ENCODE measurements at regions of chr10 and their contacts with region 1.

Region 1: GRCh38 chr10:21336476-21337170 is 188.9 kb downstream of the SKIDA1 start:
- DNase-seq: peak; percentile 90
- H3K4me3 ChIP-seq: peak overlapping the region; percentile 0 to 15 (median 8)
- H3K27ac ChIP-seq: peak overlapping the region; percentile 53
- H3K4me1 ChIP-seq: peaks cover 30% of the 10 kb centered on the region
- H3K27me3 ChIP-seq: no peaks in the 10 kb centered on the region
- CTCF ChIP-seq: peak in 1 of 2 donors; percentile 26

Region 2: DNA sequence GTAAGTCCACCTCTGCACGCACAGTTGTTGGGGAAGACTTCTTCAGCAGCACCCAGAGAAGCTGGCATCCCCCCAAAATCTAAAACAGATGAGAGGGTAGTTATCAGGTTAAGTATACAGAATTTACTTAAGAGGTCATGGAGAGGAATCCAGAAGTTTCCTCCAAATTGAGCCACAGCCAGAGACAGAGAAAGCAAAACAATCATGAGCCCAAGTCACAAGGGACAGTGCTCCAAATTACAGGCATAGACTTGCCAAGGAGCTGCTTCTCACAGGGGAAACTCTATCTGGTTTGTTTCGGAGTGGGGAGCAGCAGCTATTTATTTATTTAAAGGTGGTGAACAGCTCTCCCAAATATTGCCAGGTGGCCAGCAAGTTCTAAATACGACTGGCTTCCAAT is 119.5 kb before region 1 on chr10:
- CTCF ChIA-PET with region 1: no interaction called
- dilution Hi-C with region 1: no loop called
- in situ Hi-C with region 1: no loop called
- intact Hi-C with region 1: no loop called
- DNase-seq: no peak
- H3K4me3 ChIP-seq: no peak overlapping the region
- H3K27ac ChIP-seq: no peak overlapping the region
- H3K4me1 ChIP-seq: no peaks in the 10 kb centered on the region
- H3K27me3 ChIP-seq: no peaks in the 10 kb centered on the region
- CTCF ChIP-seq: no peak

Region 3: GRCh38 chr10:21292763-21293517 is 43.7 kb before region 1 on chr10:
- CTCF ChIA-PET with region 1: interaction called, 11 read pairs
- dilution Hi-C with region 1: no loop called
- in situ Hi-C with region 1: no loop called
- intact Hi-C with region 1: loop called (anchors 2 kb)
- DNase-seq: peak; percentile 93
- H3K4me3 ChIP-seq: peak overlapping the region; percentile 33 to 42 (median 35)
- H3K27ac ChIP-seq: peak overlapping the region; percentile 43
- H3K4me1 ChIP-seq: peaks cover 22% of the 10 kb centered on the region
- H3K27me3 ChIP-seq: no peaks in the 10 kb centered on the region
- CTCF ChIP-seq: no peak

Region 4: GRCh38 chr10:21315645-21316281 is 20.9 kb before region 1 on chr10:
- CTCF ChIA-PET with region 1: no interaction called
- dilution Hi-C with region 1: no loop called
- in situ Hi-C with region 1: no loop called
- intact Hi-C with region 1: loop called (anchors 1 kb)
- DNase-seq: peak; percentile 69
- H3K4me3 ChIP-seq: no peak overlapping the region
- H3K27ac ChIP-seq: peak overlapping the region; percentile 67
- H3K4me1 ChIP-seq: peaks cover 26% of the 10 kb centered on the region
- H3K27me3 ChIP-seq: no peaks in the 10 kb centered on the region
- CTCF ChIP-seq: no peak

Region 5: DNA sequence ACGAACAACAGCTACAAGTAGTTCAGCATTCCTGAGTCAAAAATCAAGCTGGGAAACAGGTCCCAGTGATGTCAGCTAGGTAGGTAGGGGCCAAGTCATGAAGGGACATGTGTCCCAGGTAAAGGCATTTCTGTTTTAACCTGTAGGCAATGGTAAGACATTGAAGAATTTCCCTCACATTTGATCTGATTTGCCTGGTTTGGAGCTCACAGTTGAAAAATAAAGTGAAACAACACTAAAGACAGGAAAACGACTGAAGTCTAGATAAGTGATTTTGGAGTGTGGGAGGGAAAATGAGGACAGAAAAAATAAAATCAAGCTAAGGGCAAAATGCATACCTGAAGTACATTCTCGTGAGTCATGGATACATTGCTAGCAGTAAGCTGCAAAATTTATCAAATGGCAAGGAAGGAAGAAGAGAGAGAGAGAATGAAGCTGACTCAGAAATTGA is 19.0 kb after region 1 on chr10:
- CTCF ChIA-PET with region 1: no interaction called
- dilution Hi-C with region 1: no loop called
- in situ Hi-C with region 1: no loop called
- intact Hi-C with region 1: loop called (anchors 1 kb)
- DNase-seq: peak; percentile 65
- H3K4me3 ChIP-seq: peak overlapping the region in 1 of 3 experiments; percentile 6
- H3K27ac ChIP-seq: peak overlapping the region; percentile 58
- H3K4me1 ChIP-seq: peaks cover 6% of the 10 kb centered on the region
- H3K27me3 ChIP-seq: no peaks in the 10 kb centered on the region
- CTCF ChIP-seq: no peak

Region 6: DNA sequence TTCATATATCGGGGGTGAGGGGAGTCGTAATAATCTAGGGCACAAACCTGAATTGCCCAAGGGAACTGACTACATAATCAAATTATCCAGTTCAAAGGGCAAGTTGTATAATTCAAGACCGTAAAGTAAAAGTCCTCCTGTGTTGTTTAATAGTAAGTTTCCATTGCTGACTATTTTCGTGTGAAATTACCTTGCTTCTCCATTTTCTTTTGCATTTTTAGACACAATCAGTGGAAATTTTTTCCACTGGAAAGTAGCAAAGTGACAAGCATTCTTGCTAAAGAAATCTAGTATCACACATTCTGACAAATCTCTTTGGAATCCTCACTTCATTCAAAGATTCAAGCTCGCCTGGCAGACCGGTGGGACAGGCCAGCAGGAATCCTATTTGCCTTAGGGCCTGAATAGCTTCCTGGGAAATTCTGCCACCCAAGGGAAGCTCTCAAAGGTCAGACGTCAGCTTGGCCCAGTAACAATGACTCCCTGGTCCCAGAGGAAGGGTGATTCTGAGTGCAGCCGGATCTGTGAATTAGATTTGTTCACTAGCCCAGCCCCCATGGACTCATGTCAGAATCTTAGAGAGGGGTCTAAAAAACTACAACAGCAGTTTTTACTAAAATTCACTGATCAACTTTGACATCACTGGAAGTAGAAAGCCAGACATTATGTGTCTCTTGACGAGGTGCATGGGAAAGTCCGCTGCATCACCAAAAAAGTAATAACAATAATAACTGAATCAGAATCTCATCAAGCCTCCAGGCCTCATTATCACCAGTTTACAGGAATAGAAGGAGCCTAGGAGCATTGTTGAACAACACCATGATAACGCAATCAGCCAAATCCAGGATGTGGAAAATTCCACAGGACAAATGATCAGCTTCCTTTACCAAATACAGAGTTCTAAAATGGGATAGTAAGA is 27.8 kb after region 1 on chr10:
- CTCF ChIA-PET with region 1: no interaction called
- dilution Hi-C with region 1: no loop called
- in situ Hi-C with region 1: no loop called
- intact Hi-C with region 1: loop called (anchors 1 kb)
- DNase-seq: peak; percentile 89
- H3K4me3 ChIP-seq: no peak overlapping the region
- H3K27ac ChIP-seq: peak overlapping the region; percentile 90
- H3K4me1 ChIP-seq: peaks cover 37% of the 10 kb centered on the region
- H3K27me3 ChIP-seq: no peaks in the 10 kb centered on the region
- CTCF ChIP-seq: no peak

Region 7: GRCh38 chr10:21399392-21400035 is 62.9 kb after region 1 on chr10:
- CTCF ChIA-PET with region 1: no interaction called
- dilution Hi-C with region 1: loop called (anchors 5 kb)
- in situ Hi-C with region 1: no loop called
- intact Hi-C with region 1: loop called (anchors 2 kb)
- DNase-seq: peak; percentile 84
- H3K4me3 ChIP-seq: no peak overlapping the region
- H3K27ac ChIP-seq: peak overlapping the region; percentile 77
- H3K4me1 ChIP-seq: peaks cover 36% of the 10 kb centered on the region
- H3K27me3 ChIP-seq: no peaks in the 10 kb centered on the region
- CTCF ChIP-seq: no peak

Region 8: GRCh38 chr10:21525367-21526183 is 189.0 kb after region 1 on chr10 and contains the start of gene SKIDA1:
- CTCF ChIA-PET with region 1: no interaction called
- dilution Hi-C with region 1: no loop called
- in situ Hi-C with region 1: no loop called
- intact Hi-C with region 1: loop called (anchors 5 kb)
- DNase-seq: peak; percentile 78
- H3K4me3 ChIP-seq: peak within 1 kb of the TSS; percentile 54 to 75 (median 68)
- H3K27ac ChIP-seq: peak within 1 kb of the TSS; percentile 92
- H3K4me1 ChIP-seq: peaks cover 22% of the 10 kb centered on the region
- H3K27me3 ChIP-seq: no peaks in the 10 kb centered on the region
- CTCF ChIP-seq: no peak
- total RNA-seq, gene SKIDA1: 1.3 to 1.5 TPM